GM10248 (cell line): ENCODE measurements at regions of chr10 and their contacts with region 1.

Region 1: DNA sequence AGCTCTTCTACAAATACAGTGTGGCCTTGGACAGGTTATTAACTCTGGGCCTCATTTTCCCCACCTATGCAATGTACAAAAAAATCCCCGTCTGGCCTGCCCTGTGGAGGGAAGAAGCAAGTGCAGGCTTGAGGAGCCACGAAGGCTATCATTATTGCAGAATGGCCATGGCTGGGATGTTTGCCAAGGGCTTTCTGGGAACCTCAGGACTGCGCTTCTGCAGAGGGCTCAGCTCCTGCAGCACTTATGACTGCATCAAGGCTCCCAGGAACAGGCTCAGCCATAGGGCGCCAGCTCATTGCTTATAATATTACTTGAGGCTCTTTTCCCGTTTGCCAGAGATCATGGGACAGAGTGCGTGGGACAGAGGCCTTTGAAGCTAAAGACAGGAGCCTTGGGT is 20.5 kb upstream of the C10orf105 start:
- DNase-seq: no peak
- CTCF ChIP-seq: no peak

Region 2: GRCh38 chr10:71666639-71667386 is 73.3 kb before region 1 on chr10:
- CTCF ChIA-PET with region 1: no interaction called
- POLR2A ChIA-PET with region 1: no interaction called
- DNase-seq: peak; percentile 37
- CTCF ChIP-seq: no peak

Region 3: GRCh38 chr10:71727738-71728737 is 12.0 kb before region 1 on chr10:
- CTCF ChIA-PET with region 1: interaction called, 19 read pairs
- POLR2A ChIA-PET with region 1: no interaction called
- DNase-seq: peak; percentile 77
- CTCF ChIP-seq: no peak